ENCODE measurements at regions of chr2 and their contacts with region 1.

Region 1: DNA sequence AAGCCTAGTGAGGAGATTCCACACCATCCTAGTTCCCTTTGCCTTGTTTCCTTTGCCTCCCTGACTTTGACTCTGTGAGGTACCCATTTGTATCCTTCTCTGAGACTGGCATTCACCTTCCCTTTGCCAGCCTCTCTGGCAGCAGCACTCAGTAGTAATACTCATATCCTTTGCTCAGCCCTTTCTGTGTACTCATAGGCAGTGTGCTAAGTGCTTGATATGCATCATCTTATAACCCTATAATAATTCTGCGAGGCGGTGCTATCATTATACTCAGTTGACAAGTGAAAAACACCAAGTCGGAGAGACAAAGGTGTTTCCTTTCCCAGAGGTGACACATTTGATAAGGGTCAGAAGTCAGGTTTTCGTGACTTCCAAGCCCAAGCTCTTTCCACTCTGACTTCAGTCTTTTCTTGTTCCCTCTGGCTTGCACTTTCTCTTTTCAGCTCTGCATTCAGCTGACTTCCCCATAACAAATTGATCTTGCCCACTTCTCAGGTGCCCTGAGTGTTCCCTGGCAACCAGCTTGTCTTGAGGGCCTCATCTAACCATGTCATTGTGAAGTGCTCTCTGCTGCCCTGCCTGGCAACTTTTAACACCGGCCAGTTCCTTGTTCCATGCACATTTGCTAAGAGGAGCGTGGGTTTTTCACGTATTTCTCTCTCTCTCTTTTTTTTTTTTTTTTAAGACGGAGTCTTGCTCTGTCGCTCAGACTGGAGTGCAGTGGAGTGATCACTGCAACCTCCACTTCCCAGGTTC is 94.5 kb upstream of the UPP2 start:
- ATAC-seq: peak in 4 of 8 experiments; percentile 28 to 89 (median 42)
- H3K4me3 ChIP-seq: no peak overlapping the region
- H3K27ac ChIP-seq: no peak overlapping the region
- H3K4me1 ChIP-seq: no peaks in the 10 kb centered on the region

Region 2: DNA sequence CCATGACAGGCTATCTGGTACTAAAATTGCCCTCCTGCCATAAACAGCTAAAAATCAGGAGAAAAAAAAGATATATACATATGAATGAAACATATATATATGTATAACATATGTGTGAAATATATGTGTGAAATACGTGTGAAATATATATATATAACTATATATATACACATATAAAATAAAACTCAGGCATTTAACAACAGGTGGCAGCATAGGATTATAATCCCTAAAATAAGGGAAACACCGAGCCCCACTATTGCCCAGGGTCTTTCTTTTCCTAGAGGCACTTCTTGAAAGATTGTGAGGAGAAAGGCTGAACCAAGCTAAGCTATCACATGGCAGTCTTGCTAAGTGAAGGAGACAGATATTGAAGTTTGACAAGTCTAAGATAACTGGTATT is 497.4 kb before region 1 on chr2:
- in situ Hi-C with region 1: loop called in 2 of 9 experiments (anchors 10 to 25 kb)
- ATAC-seq: no peak
- H3K4me3 ChIP-seq: no peak overlapping the region
- H3K27ac ChIP-seq: no peak overlapping the region
- H3K4me1 ChIP-seq: no peaks in the 10 kb centered on the region

Region 3: DNA sequence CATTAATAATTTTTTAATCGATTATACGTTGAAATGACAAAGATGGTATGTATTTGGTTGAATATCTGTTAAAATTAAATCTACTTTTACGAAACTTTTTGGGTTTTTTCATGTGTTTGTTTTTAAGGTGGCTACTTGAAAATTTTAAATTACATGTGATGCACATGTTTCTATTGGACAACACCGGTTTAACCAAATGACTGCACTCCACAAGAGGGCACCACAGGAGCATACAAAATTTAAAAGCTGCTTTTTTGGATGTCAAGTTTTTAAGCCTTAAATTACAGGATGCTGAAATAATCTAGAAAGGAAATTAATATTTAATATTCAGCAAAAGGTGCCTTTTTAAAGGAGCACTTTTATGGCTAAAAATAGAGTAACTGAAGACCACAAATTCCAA is 229.7 kb before region 1 on chr2:
- in situ Hi-C with region 1: loop called in 3 of 9 experiments (anchors 10 to 25 kb)
- ATAC-seq: no peak
- H3K4me3 ChIP-seq: no peak overlapping the region
- H3K27ac ChIP-seq: no peak overlapping the region
- H3K4me1 ChIP-seq: no peaks in the 10 kb centered on the region

Region 4: GRCh38 chr2:157784169-157784822 is 222.8 kb before region 1 on chr2:
- in situ Hi-C with region 1: loop called in 3 of 9 experiments (anchors 10 to 25 kb)
- ATAC-seq: peak; percentile 54 to 97 (median 86)
- H3K4me3 ChIP-seq: no peak overlapping the region
- H3K27ac ChIP-seq: no peak overlapping the region
- H3K4me1 ChIP-seq: no peaks in the 10 kb centered on the region

Region 5: GRCh38 chr2:158191076-158191895 is 184.1 kb after region 1 on chr2:
- in situ Hi-C with region 1: no loop called
- ATAC-seq: peak in 3 of 8 experiments; percentile 54 to 62 (median 58)
- H3K4me3 ChIP-seq: no peak overlapping the region
- H3K27ac ChIP-seq: no peak overlapping the region
- H3K4me1 ChIP-seq: peaks cover 0 to 3% of the 10 kb centered on the region in 2 donors